Naive thymus-derived CD4-positive, alpha-beta T cell (primary cell): ENCODE measurements at regions of chr18 and their contacts with region 1.

Region 1: DNA sequence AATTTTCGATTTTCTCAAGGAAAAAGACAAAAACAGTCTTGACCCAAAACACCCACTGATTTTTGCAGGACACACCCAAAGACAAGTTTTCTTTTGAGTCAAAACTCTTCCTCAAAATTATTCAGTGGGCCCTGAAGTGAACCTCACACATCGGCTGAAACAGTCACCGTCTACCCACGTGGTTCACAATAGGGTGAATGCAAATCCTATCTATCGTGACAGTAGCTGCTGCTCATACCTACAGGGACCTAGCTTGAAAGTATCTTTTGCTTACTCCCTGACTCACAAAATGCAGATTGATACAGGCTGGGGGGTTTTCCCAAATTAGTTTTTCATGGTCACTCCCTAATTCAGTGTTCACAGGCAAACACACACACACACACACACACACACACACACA is 10.7 kb upstream of the CD226 start:
- DNase-seq: no peak
- ATAC-seq: peak; percentile 13
- H3K4me3 ChIP-seq: no peak overlapping the region
- H3K4me3 Mint-ChIP-seq: peak overlapping the region in 1 of 10 donors; percentile 32
- H3K27ac ChIP-seq: peak overlapping the region; percentile 26
- H3K27ac Mint-ChIP-seq: no peak overlapping the region
- H3K4me1 ChIP-seq: peaks cover 17 to 41% of the 10 kb centered on the region in 2 donors
- H3K4me1 Mint-ChIP-seq: peaks cover 2 to 26% (median 17%) of the 10 kb centered on the region in 7 donors
- H3K27me3 ChIP-seq: no peaks in the 10 kb centered on the region
- H3K27me3 Mint-ChIP-seq: no peaks in the 10 kb centered on the region

Region 2: DNA sequence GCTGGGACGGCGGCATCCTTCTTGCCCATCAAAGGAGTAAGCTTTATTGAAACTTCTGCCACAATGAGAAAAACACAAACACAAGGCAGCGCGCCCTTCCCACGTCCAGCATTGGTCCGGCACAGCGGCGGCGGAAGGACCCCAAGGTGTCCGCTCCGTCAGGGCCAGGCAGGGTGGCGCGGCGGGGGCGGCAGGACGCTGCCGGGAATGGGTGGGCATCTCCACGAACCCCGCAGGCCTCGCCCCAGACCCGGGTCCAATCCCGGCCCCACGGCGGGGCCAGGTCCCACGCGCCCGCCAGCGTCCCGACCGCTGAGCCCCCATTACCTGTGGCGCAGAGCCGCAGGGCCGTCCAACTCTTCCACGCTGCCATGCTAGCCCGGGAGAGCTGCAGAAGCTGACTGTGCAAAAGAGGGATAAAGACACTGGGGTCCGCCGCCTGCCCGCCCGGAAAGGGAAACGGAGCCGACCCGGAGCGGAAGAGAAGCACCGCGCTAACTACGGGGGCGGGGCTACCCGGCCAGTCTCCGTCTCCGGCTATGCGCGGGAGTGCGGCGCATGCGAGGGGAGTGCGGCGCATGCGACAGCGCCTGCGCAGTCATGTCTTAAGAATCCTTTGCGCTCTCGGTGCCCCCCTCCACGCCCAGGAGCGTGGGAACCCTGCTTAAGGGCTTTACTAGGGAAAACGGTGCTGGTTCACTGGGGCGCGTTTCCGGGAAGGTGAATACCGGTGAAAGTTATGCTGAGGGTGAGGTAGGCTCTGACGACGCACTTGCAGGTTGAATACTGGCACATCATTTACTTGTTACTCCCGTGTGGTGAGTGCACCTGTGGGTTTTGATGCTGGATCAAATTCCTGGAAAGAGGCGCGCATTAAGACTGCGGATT is 1243.6 kb before region 1 on chr18 and contains the start of gene TMX3:
- CTCF ChIA-PET with region 1: no interaction called
- POLR2A ChIA-PET with region 1: no interaction called
- intact Hi-C with region 1: loop called in 1 of 2 experiments (anchors 10 kb)
- DNase-seq: peak; percentile 86 to 93 (median 90)
- ATAC-seq: peak; percentile 99
- H3K4me3 ChIP-seq: peak within 1 kb of the TSS; percentile 86
- H3K4me3 Mint-ChIP-seq: peak within 1 kb of the TSS; percentile 93 to 100 (median 96)
- H3K27ac ChIP-seq: peak within 1 kb of the TSS; percentile 74
- H3K27ac Mint-ChIP-seq: peak within 1 kb of the TSS; percentile 88 to 98 (median 95)
- H3K4me1 ChIP-seq: peaks cover 4 to 17% of the 10 kb centered on the region in 2 donors
- H3K4me1 Mint-ChIP-seq: peaks cover 21 to 61% (median 53%) of the 10 kb centered on the region in 7 donors
- H3K27me3 ChIP-seq: no peaks in the 10 kb centered on the region
- H3K27me3 Mint-ChIP-seq: no peaks in the 10 kb centered on the region
- total RNA-seq, gene TMX3: 42.0 to 76.5 (median 63.2) TPM

Region 3: GRCh38 chr18:69845593-69846506 is 112.6 kb before region 1 on chr18:
- CTCF ChIA-PET with region 1: interaction called, 3 read pairs
- POLR2A ChIA-PET with region 1: interaction called, 5 read pairs
- intact Hi-C with region 1: loop called in 1 of 2 experiments (anchors 1 kb)
- DNase-seq: peak in 2 of 9 donors; percentile 5 to 12
- ATAC-seq: no peak
- H3K4me3 ChIP-seq: no peak overlapping the region
- H3K4me3 Mint-ChIP-seq: no peak overlapping the region
- H3K27ac ChIP-seq: no peak overlapping the region
- H3K27ac Mint-ChIP-seq: peak overlapping the region in 1 of 9 donors; percentile 4
- H3K4me1 ChIP-seq: no peaks in the 10 kb centered on the region
- H3K4me1 Mint-ChIP-seq: peaks cover 0 to 3% (median 0%) of the 10 kb centered on the region in 7 donors
- H3K27me3 ChIP-seq: no peaks in the 10 kb centered on the region
- H3K27me3 Mint-ChIP-seq: no peaks in the 10 kb centered on the region

Region 4: DNA sequence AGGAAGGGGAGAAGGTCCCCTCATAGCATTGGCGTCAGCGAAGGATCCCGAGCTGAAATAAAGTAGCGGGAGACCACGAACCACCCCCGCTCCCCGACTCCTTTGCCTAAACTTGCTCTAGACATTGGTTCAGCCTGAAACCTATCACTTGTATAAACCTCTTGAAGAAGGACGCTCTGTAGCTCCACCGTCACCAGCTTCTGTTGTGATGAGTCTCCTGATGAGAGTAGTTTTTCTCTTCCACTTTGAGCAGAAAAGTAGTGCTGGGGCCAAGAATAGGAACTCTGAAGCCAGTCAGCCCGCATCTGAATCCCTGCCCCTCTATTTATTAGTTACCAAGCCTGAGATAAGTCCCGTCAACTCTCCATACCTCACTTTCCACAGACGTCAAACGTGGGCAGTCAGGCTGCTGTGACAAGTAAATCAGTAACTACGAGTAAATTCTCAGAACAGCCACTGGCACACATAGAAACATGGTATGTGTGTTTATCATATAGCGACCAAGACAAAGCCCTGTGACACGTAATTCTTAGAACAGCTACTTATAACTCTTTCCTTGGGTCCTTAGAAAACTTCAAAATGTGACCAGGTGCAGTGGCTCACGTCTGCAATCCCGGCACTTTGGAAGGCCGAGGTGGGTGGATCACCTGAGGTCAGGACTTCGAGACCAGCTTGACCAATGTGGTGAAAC is 72.4 kb before region 1 on chr18:
- CTCF ChIA-PET with region 1: interaction called, 3 read pairs
- POLR2A ChIA-PET with region 1: no interaction called
- intact Hi-C with region 1: loop called in 1 of 2 experiments (anchors 1 kb)
- DNase-seq: peak in 1 of 9 donors; percentile 50
- ATAC-seq: peak; percentile 32
- H3K4me3 ChIP-seq: no peak overlapping the region
- H3K4me3 Mint-ChIP-seq: peak overlapping the region in 2 of 10 donors; percentile 36 to 89
- H3K27ac ChIP-seq: no peak overlapping the region
- H3K27ac Mint-ChIP-seq: peak overlapping the region in 6 of 9 donors; percentile 5 to 99 (median 62)
- H3K4me1 ChIP-seq: peaks cover 4 to 28% of the 10 kb centered on the region in 2 donors
- H3K4me1 Mint-ChIP-seq: peaks cover 38 to 81% (median 73%) of the 10 kb centered on the region in 7 donors
- H3K27me3 ChIP-seq: no peaks in the 10 kb centered on the region
- H3K27me3 Mint-ChIP-seq: no peaks in the 10 kb centered on the region

Region 5: DNA sequence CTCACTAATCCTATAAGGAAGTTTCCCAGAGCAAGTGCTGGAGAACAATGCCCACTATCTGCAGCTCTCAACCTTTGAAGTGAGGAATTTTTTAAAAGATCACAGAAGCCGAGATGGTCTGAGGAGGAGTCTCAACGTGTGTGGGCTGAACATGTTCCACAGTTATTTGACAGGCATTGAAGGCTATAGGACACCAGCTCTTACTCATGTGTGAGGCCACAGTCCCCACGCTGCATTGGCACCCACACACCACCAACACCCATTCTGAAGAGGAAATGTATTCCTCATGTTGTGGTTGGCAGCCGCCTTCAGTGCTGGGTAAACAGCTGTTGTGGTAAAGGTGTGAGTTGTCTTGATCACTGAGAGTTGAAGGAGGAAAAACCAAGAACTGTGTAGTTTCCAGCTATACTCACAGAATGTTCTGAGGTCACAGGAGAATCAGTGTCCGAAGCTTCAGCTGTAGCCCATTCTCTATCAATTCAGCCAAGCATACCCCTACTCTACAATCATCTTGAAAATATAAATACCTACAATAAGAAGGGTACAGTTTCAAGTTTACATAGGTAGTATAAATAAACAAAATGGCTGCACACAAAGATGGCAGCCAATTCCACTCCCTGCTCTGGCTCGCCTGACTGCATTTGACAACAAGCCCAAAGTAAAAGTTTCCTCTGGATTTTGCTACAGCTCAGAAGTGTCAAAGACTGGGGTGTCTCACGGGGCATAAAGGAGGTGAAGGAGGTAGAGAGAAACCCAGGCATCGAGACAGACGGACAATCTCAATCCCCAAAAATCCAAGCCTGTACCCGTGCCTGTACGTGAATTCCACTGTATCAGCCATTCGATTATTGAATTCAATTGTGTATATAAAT is 22.9 kb before region 1 on chr18:
- CTCF ChIA-PET with region 1: interaction called, 18 read pairs
- POLR2A ChIA-PET with region 1: interaction called, 45 read pairs
- intact Hi-C with region 1: loop called (anchors 1 kb)
- DNase-seq: peak; percentile 29 to 85 (median 75)
- ATAC-seq: peak; percentile 96
- H3K4me3 ChIP-seq: peak overlapping the region; percentile 36
- H3K4me3 Mint-ChIP-seq: peak overlapping the region in 1 of 10 donors; percentile 76
- H3K27ac ChIP-seq: peak overlapping the region; percentile 38
- H3K27ac Mint-ChIP-seq: no peak overlapping the region
- H3K4me1 ChIP-seq: peaks cover 44 to 53% of the 10 kb centered on the region in 2 donors
- H3K4me1 Mint-ChIP-seq: peaks cover 0 to 40% (median 18%) of the 10 kb centered on the region in 7 donors
- H3K27me3 ChIP-seq: no peaks in the 10 kb centered on the region
- H3K27me3 Mint-ChIP-seq: no peaks in the 10 kb centered on the region

Region 6: GRCh38 chr18:69978732-69979715 is 20.6 kb after region 1 on chr18:
- CTCF ChIA-PET with region 1: no interaction called
- POLR2A ChIA-PET with region 1: no interaction called
- intact Hi-C with region 1: loop called in 1 of 2 experiments (anchors 2 kb)
- DNase-seq: no peak
- ATAC-seq: no peak
- H3K4me3 ChIP-seq: no peak overlapping the region
- H3K4me3 Mint-ChIP-seq: peak overlapping the region in 1 of 10 donors; percentile 37
- H3K27ac ChIP-seq: no peak overlapping the region
- H3K27ac Mint-ChIP-seq: peak overlapping the region in 2 of 9 donors; percentile 26
- H3K4me1 ChIP-seq: no peaks in the 10 kb centered on the region
- H3K4me1 Mint-ChIP-seq: peaks cover 6 to 46% (median 16%) of the 10 kb centered on the region in 7 donors
- H3K27me3 ChIP-seq: no peaks in the 10 kb centered on the region
- H3K27me3 Mint-ChIP-seq: no peaks in the 10 kb centered on the region

Region 7: GRCh38 chr18:70205421-70206397 is 247.3 kb after region 1 on chr18 and contains the start of gene RTTN:
- CTCF ChIA-PET with region 1: no interaction called
- POLR2A ChIA-PET with region 1: no interaction called
- intact Hi-C with region 1: loop called (anchors 2 to 5 kb)
- DNase-seq: peak; percentile 88 to 95 (median 92)
- ATAC-seq: peak; percentile 96
- H3K4me3 ChIP-seq: peak within 1 kb of the TSS; percentile 91
- H3K4me3 Mint-ChIP-seq: peak within 1 kb of the TSS; percentile 90 to 99 (median 97)
- H3K27ac ChIP-seq: peak within 1 kb of the TSS; percentile 87
- H3K27ac Mint-ChIP-seq: peak within 1 kb of the TSS; percentile 97 to 100 (median 99)
- H3K4me1 ChIP-seq: peaks cover 5 to 9% of the 10 kb centered on the region in 2 donors
- H3K4me1 Mint-ChIP-seq: peaks cover 8 to 42% (median 34%) of the 10 kb centered on the region in 7 donors
- H3K27me3 ChIP-seq: no peaks in the 10 kb centered on the region
- H3K27me3 Mint-ChIP-seq: peaks cover 0 to 11% (median 0%) of the 10 kb centered on the region in 5 donors
- total RNA-seq, gene RTTN: 26.8 to 33.2 (median 28.2) TPM